CD8-positive, alpha-beta memory T cell (primary cell): ENCODE measurements at regions of chr17 and their contacts with region 1.

Region 1: DNA sequence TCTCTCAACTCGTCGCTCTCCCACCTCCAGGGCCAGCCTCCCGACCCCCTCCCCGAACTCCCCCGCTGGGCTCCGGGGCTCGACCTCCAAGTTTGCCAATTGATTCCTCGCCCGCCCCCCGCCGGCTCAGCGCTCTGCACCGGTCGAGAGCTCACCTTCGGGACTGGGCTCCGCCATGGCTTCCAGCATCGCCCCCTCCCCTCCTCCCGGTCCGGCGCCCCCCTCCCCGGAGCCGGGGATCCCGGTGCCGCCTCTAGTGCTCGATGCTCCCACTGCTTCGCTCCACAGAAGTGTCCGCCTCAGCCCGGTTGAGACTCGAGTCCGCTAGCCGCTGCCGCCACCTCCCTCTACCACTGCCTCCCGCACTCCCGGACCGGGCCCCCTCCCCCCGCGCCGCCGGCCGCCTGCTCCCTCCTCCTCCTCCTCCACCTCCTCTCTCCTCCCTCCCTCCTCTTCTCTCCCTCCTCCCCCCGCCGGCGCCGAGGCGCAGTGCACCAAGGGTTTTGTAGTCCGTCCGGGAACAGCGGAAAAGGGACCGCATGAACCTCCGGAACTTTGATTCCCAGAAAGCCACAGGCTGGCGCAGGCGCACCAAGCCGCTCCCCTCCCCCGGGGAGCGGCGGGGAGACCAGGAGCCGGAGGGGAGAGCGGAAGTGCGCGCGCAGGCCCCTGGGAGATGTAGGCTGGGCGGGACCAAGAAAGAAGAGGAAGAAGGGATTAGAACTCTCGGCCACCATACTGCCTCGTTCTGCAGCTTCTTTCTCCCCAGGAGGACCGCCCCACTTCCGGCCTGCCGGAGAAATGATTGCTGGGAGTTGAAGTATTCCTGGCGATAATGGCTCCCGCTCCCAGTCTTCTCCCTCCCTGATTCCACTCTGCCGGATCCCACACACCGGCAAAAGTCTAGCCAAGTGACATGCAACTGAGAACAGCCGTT is at the start of gene PHF23:
- DNase-seq: peak; percentile 95 to 97 (median 97)
- H3K4me3 ChIP-seq: peak within 1 kb of the TSS; percentile 83
- H3K4me3 Mint-ChIP-seq: peak within 1 kb of the TSS; percentile 93 to 99 (median 96)
- H3K27ac ChIP-seq: peak within 1 kb of the TSS; percentile 90
- H3K27ac Mint-ChIP-seq: peak within 1 kb of the TSS; percentile 88 to 100 (median 98)
- H3K4me1 ChIP-seq: peaks cover 41% of the 10 kb centered on the region
- H3K4me1 Mint-ChIP-seq: peaks cover 51 to 67% (median 57%) of the 10 kb centered on the region in 3 donors
- H3K27me3 ChIP-seq: no peaks in the 10 kb centered on the region
- H3K27me3 Mint-ChIP-seq: peaks cover 0 to 11% of the 10 kb centered on the region in 2 donors
- total RNA-seq, gene PHF23: 48.0 to 51.9 TPM

Region 2: DNA sequence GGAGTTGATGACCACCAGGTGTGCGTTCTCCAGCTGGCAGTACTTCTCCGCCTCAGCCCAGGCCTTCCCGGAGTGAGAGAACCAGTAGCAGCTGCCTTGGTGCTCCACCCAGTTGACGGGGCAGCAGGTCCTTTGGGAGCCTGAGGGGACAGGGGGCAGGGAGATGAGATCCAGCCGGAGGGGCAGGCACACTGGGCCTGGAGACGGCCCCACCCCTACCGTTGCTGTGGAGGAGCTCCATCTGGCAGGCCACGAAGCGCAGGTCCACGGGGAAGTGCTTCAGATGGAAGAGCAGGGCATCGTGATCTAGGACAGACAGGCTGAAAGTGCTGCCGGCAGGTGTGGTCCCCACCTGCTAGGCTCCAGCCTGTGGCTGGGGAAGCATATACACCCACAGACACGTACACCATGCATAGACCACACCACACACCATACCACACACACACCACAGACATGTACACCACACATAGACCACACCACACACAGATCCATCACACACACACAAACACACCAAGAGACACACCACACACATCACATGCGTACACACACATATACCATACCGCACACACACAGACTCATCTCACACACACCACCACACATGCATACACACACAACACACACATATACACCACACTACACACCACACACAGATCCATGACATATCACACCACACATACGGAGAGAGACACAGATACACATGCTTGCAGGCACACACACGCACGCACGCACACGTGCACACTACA is 132.2 kb before region 1 on chr17:
- CTCF ChIA-PET with region 1: no interaction called
- POLR2A ChIA-PET with region 1: no interaction called
- DNase-seq: no peak
- H3K4me3 ChIP-seq: no peak overlapping the region
- H3K4me3 Mint-ChIP-seq: no peak overlapping the region
- H3K27ac ChIP-seq: no peak overlapping the region
- H3K27ac Mint-ChIP-seq: no peak overlapping the region
- H3K4me1 ChIP-seq: no peaks in the 10 kb centered on the region
- H3K4me1 Mint-ChIP-seq: peaks cover 7 to 9% (median 8%) of the 10 kb centered on the region in 3 donors
- H3K27me3 ChIP-seq: peaks cover 6% of the 10 kb centered on the region
- H3K27me3 Mint-ChIP-seq: peaks cover 11 to 28% of the 10 kb centered on the region in 2 donors

Region 3: GRCh38 chr17:7122381-7122780 is 117.0 kb before region 1 on chr17:
- CTCF ChIA-PET with region 1: no interaction called
- POLR2A ChIA-PET with region 1: no interaction called
- DNase-seq: no peak
- H3K4me3 ChIP-seq: no peak overlapping the region
- H3K4me3 Mint-ChIP-seq: no peak overlapping the region
- H3K27ac ChIP-seq: no peak overlapping the region
- H3K27ac Mint-ChIP-seq: no peak overlapping the region
- H3K4me1 ChIP-seq: no peaks in the 10 kb centered on the region
- H3K4me1 Mint-ChIP-seq: no peaks in the 10 kb centered on the region
- H3K27me3 ChIP-seq: no peaks in the 10 kb centered on the region
- H3K27me3 Mint-ChIP-seq: peaks cover 14 to 33% of the 10 kb centered on the region in 2 donors

Region 4: GRCh38 chr17:7136266-7136877 is 103.0 kb before region 1 on chr17:
- CTCF ChIA-PET with region 1: interaction called, 3 read pairs
- POLR2A ChIA-PET with region 1: interaction called, 11 read pairs
- DNase-seq: peak; percentile 58 to 84 (median 69)
- H3K4me3 ChIP-seq: no peak overlapping the region
- H3K4me3 Mint-ChIP-seq: no peak overlapping the region
- H3K27ac ChIP-seq: no peak overlapping the region
- H3K27ac Mint-ChIP-seq: no peak overlapping the region
- H3K4me1 ChIP-seq: peaks cover 13% of the 10 kb centered on the region
- H3K4me1 Mint-ChIP-seq: peaks cover 12 to 26% (median 17%) of the 10 kb centered on the region in 3 donors
- H3K27me3 ChIP-seq: no peaks in the 10 kb centered on the region
- H3K27me3 Mint-ChIP-seq: peaks cover 18 to 20% of the 10 kb centered on the region in 2 donors

Region 5: DNA sequence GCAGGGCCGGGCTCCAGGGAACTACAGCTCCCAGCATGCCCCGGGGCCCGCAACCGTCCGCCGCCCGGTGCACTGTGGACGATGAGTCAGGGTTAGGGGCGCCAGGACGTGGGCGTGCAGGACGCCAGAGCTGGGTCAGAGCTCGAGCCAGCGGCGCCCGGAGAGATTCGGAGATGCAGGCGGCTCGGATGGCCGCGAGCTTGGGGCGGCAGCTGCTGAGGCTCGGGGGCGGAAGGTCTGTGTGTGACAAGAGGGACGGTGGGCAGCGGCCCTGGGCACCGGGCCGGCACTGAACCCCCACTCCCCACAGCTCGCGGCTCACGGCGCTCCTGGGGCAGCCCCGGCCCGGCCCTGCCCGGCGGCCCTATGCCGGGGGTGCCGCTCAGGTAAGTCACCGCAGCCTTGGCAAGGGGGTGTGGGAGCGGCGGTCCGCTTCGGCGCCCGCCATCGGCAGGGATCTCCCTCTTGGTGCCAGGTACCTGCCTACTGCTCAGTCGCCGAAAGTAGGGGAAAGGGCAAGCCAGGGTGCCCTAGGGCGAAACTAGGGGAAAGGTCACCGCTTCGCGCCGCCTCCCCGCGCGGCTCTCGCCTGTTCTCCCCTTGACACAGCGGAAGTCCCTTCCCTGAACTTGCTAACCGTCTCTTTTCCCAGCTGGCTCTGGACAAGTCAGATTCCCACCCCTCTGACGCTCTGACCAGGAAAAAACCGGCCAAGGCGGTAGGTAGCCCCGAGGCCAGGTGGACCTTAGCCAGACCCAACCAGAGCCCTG is 19.4 kb before region 1 on chr17 and contains the starts of genes ACADVL and DLG4:
- CTCF ChIA-PET with region 1: interaction called, 20 read pairs
- POLR2A ChIA-PET with region 1: interaction called, 31 read pairs
- DNase-seq: peak; percentile 65 to 86 (median 70)
- H3K4me3 ChIP-seq: peak within 1 kb of the TSS; percentile 67
- H3K4me3 Mint-ChIP-seq: peak within 1 kb of the TSS; percentile 74 to 96 (median 93)
- H3K27ac ChIP-seq: peak within 1 kb of the TSS; percentile 70
- H3K27ac Mint-ChIP-seq: peak within 1 kb of the TSS; percentile 81 to 100 (median 98)
- H3K4me1 ChIP-seq: peaks cover 54% of the 10 kb centered on the region
- H3K4me1 Mint-ChIP-seq: peaks cover 35 to 62% (median 46%) of the 10 kb centered on the region in 3 donors
- H3K27me3 ChIP-seq: no peaks in the 10 kb centered on the region
- H3K27me3 Mint-ChIP-seq: no peaks in the 10 kb centered on the region
- total RNA-seq, gene ACADVL: 281 to 288 TPM
- total RNA-seq, gene DLG4: 3.5 to 4.4 TPM

Region 6: DNA sequence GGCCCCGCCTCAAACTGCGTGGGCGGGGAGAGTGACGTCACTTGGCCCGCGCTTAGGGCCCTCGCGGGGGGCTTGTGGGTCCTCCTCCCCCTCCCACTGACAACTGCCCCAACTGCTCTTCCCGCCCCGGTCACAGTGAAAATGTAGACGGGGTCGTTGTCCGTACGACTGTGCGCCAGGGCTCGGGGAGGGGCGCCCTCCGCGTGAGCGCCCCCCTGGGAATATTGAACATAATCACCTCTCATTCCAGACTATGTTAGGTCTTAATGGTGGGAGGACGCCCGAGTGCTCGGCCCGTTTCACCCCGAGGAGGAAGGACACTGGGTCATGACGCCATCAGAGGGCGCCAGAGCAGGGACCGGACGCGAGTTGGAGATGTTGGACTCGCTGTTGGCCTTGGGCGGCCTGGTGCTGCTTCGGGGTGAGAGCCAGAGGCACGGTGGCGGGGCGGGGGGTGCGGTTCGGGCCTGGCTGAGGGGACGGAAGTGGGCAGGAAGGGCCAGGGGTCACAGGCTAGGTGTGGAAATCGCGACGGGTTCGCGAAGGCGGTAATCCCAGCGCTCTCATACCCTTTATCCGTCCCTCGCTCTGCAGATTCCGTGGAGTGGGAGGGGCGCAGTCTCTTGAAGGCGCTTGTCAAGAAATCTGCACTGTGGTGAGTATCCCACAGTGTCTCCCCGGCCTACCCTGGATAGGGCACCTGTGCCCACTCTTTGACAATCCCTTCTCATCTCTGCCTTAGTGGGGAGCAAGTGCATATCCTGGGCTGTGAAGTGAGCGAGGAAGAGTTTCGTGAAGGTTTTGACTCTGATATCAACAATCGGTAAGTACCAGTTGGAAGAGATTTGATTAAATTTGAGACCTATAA is 13.1 kb after region 1 on chr17 and contains the start of gene ELP5:
- CTCF ChIA-PET with region 1: interaction called, 6 read pairs
- POLR2A ChIA-PET with region 1: interaction called, 16 read pairs
- DNase-seq: peak; percentile 82 to 99 (median 87)
- H3K4me3 ChIP-seq: peak within 1 kb of the TSS; percentile 85
- H3K4me3 Mint-ChIP-seq: peak within 1 kb of the TSS; percentile 94 to 98 (median 96)
- H3K27ac ChIP-seq: peak within 1 kb of the TSS; percentile 97
- H3K27ac Mint-ChIP-seq: peak within 1 kb of the TSS; percentile 97 to 100 (median 99)
- H3K4me1 ChIP-seq: peaks cover 33% of the 10 kb centered on the region
- H3K4me1 Mint-ChIP-seq: peaks cover 38 to 55% (median 41%) of the 10 kb centered on the region in 3 donors
- H3K27me3 ChIP-seq: no peaks in the 10 kb centered on the region
- H3K27me3 Mint-ChIP-seq: peaks cover 0 to 2% of the 10 kb centered on the region in 2 donors
- total RNA-seq, gene ELP5: 106 to 111 TPM

Region 7: GRCh38 chr17:7280519-7281429 is 41.4 kb after region 1 on chr17:
- CTCF ChIA-PET with region 1: no interaction called
- POLR2A ChIA-PET with region 1: no interaction called
- DNase-seq: peak; percentile 77 to 89 (median 81)
- H3K4me3 ChIP-seq: peak overlapping the region; percentile 54
- H3K4me3 Mint-ChIP-seq: peak overlapping the region; percentile 79 to 92 (median 80)
- H3K27ac ChIP-seq: no peak overlapping the region
- H3K27ac Mint-ChIP-seq: peak overlapping the region in 7 of 8 donors; percentile 56 to 92 (median 71)
- H3K4me1 ChIP-seq: peaks cover 20% of the 10 kb centered on the region
- H3K4me1 Mint-ChIP-seq: peaks cover 13 to 25% (median 14%) of the 10 kb centered on the region in 3 donors
- H3K27me3 ChIP-seq: peaks cover 8% of the 10 kb centered on the region
- H3K27me3 Mint-ChIP-seq: peaks cover 21 to 32% of the 10 kb centered on the region in 2 donors

Region 8: DNA sequence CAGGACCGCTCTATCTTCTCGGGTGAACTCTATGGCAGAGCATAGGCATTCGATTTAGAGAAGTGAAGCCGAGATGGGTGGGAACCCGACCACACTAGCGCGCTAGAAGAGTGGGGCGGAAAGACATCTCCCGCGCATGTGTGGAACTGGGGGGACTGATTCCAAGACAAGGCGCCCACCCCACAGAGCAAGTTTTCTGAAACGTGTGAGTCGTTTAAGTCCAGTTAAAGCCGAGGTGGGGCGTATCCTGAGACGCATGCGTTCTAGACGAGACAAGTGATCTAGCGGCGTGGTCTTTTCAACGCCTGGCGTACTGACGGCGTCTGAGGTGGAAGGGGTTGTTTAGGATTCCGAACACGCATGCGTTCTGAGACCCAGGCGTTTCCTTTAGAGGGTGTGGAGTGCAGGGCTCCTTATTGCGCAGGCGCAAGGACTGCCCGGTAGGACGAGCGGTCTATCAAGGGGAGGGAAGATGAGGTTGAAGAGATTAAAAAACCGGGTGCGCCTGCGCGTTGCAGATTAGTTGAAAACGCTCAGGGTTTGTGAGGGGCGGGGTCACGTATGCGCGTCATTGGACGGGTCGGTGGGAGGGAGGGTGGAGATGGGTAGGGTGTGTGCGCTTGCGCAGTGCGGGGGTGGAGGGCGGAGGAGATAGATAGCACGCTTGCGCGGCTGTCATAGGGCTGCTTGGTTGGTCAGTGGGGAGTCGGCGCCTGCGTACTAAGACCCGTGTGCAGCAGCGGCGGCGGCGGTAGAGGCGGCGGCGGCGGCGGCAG is 67.7 kb after region 1 on chr17 and contains the start of gene EIF5A:
- CTCF ChIA-PET with region 1: no interaction called
- POLR2A ChIA-PET with region 1: interaction called, 11 read pairs
- DNase-seq: peak; percentile 100
- H3K4me3 ChIP-seq: peak within 1 kb of the TSS; percentile 62
- H3K4me3 Mint-ChIP-seq: peak within 1 kb of the TSS; percentile 92 to 99 (median 95)
- H3K27ac ChIP-seq: peak within 1 kb of the TSS; percentile 98
- H3K27ac Mint-ChIP-seq: peak within 1 kb of the TSS; percentile 97 to 99 (median 99)
- H3K4me1 ChIP-seq: peaks cover 30% of the 10 kb centered on the region
- H3K4me1 Mint-ChIP-seq: peaks cover 36 to 39% (median 38%) of the 10 kb centered on the region in 3 donors
- H3K27me3 ChIP-seq: no peaks in the 10 kb centered on the region
- H3K27me3 Mint-ChIP-seq: peaks cover 0 to 5% of the 10 kb centered on the region in 2 donors
- total RNA-seq, gene EIF5A: 1,533 to 1,595 TPM

Region 9: DNA sequence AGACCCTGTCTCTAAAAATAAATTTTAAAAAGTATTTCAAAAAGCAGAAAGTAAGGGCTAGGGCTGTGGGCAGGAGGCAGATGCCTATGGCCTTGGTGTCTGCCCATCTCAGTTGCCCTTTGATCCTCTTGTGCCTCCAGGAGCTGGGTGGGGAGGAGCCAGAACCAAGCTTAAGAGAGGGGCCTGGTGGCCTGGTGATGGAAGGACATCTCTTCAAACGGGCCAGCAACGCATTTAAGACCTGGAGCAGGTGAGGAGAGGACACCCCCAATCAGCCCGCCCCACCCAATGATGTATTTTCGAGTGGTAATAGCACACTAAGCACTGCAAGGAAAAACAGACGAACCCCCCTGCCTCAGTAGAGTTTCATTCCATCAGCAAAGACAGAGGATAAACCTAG is 105.0 kb after region 1 on chr17:
- CTCF ChIA-PET with region 1: no interaction called
- POLR2A ChIA-PET with region 1: no interaction called
- DNase-seq: no peak
- H3K4me3 ChIP-seq: no peak overlapping the region
- H3K4me3 Mint-ChIP-seq: no peak overlapping the region
- H3K27ac ChIP-seq: no peak overlapping the region
- H3K27ac Mint-ChIP-seq: peak overlapping the region in 1 of 8 donors; percentile 78
- H3K4me1 ChIP-seq: peaks cover 8% of the 10 kb centered on the region
- H3K4me1 Mint-ChIP-seq: peaks cover 16 to 37% (median 17%) of the 10 kb centered on the region in 3 donors
- H3K27me3 ChIP-seq: no peaks in the 10 kb centered on the region
- H3K27me3 Mint-ChIP-seq: no peaks in the 10 kb centered on the region